B cell (primary cell): ENCODE measurements at regions of chr1 and their contacts with region 1.

Region 1: DNA sequence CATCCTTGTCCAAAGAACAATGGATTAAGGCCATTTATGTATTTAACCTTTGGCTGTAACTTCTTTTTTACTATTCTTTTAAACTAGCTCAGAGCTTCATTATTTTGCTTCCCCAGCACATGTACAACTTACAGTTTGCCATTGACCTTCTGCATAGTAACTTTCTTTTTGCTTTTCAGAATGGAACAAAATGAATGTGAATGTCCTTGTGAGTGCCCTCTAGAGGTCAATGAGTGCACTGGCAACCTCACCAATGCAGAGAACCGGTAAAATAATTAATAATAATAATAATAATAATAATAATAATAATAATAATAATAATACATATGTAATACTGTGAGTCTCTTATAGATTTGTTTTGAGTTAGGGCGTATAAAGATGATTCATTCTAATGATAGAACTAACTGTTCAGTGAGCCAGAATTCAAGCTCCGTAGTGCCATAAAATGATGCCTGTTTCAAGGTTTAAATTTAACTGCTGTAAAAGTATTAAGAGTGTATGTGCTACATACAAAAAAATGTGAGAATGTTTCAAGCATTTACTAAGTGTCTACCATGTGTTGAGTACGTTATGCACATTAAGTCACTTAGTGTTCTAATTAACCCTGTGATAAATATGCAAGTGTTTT is 69.0 kb upstream of the RAVER2 start:
- DNase-seq: peak; percentile 7
- ATAC-seq: no peak
- H3K4me3 ChIP-seq: no peak overlapping the region
- H3K4me3 Mint-ChIP-seq: no peak overlapping the region
- H3K27ac ChIP-seq: no peak overlapping the region
- H3K27ac Mint-ChIP-seq: no peak overlapping the region
- H3K4me1 ChIP-seq: no peaks in the 10 kb centered on the region
- H3K4me1 Mint-ChIP-seq: no peaks in the 10 kb centered on the region
- H3K27me3 ChIP-seq: no peaks in the 10 kb centered on the region
- H3K27me3 Mint-ChIP-seq: peaks cover 9% of the 10 kb centered on the region
- CTCF ChIP-seq: peak; percentile 84

Region 2: GRCh38 chr1:64663668-64664067 is 12.2 kb before region 1 on chr1:
- CTCF ChIA-PET with region 1: interaction called, 45 read pairs
- POLR2A ChIA-PET with region 1: no interaction called
- intact Hi-C with region 1: no loop called
- DNase-seq: no peak
- ATAC-seq: no peak
- H3K4me3 ChIP-seq: no peak overlapping the region
- H3K4me3 Mint-ChIP-seq: no peak overlapping the region
- H3K27ac ChIP-seq: no peak overlapping the region
- H3K27ac Mint-ChIP-seq: no peak overlapping the region
- H3K4me1 ChIP-seq: no peaks in the 10 kb centered on the region
- H3K4me1 Mint-ChIP-seq: no peaks in the 10 kb centered on the region
- H3K27me3 ChIP-seq: no peaks in the 10 kb centered on the region
- H3K27me3 Mint-ChIP-seq: peaks cover 8% of the 10 kb centered on the region
- CTCF ChIP-seq: no peak

Region 3: DNA sequence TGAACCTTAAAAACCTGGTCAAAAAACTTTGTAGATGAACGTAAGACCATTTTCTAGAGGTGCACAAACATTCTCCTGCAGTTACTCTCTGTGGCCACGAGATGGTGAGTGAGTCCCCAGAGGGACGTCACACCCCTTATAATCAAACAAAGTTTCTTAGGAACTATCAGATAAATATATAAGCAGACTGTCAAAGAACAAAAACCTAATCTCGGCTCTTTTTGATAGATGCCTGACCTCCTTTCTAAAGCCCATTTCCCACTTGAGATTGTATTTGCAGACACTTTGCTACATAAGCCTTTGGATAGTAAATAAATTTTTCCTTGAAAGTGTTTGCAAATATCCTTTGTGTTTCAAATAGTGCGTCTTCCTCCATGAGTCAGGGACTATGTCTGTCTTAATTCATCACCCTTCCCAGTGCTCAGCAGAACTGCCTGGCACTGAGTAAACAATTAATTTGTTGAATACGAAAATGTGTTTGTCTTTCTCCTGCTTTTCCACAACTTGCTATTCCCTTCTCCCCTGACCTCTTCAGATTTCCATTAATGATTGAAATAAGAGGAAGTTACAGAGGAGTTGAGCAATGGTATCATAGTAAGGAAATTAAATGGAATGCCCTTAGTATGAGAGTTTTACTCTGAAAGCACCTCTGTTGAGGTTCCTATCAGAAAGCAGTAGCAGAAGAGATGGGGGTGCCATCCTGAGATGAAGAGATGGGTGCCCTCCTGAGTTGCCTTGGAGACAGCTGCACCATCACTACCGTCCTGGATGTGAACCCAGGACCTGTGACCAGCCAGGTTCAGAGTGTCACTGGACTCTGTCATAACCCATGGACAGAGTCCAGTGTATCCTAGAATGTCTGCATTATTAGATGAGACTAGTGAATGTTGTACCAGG is 11.2 kb after region 1 on chr1:
- CTCF ChIA-PET with region 1: interaction called, 20 read pairs
- POLR2A ChIA-PET with region 1: no interaction called
- intact Hi-C with region 1: no loop called
- DNase-seq: peak; percentile 55
- ATAC-seq: peak; percentile 69
- H3K4me3 ChIP-seq: no peak overlapping the region
- H3K4me3 Mint-ChIP-seq: no peak overlapping the region
- H3K27ac ChIP-seq: no peak overlapping the region
- H3K27ac Mint-ChIP-seq: no peak overlapping the region
- H3K4me1 ChIP-seq: no peaks in the 10 kb centered on the region
- H3K4me1 Mint-ChIP-seq: no peaks in the 10 kb centered on the region
- H3K27me3 ChIP-seq: no peaks in the 10 kb centered on the region
- H3K27me3 Mint-ChIP-seq: peaks cover 11% of the 10 kb centered on the region
- CTCF ChIP-seq: peak; percentile 89